Right cardiac atrium (tissue), 5 donors: ENCODE measurements at regions of chr9 and their contacts with region 1.

Region 1: GRCh38 chr9:71162126-71162525 is 40.7 kb upstream of the TRPM3 start:
- DNase-seq: no peak
- ATAC-seq: no peak
- H3K4me3 ChIP-seq: no peak overlapping the region
- H3K27ac ChIP-seq: no peak overlapping the region
- H3K4me1 ChIP-seq: no peaks in the 10 kb centered on the region
- H3K27me3 ChIP-seq: no peaks in the 10 kb centered on the region

Region 2: GRCh38 chr9:71108937-71109336 is 53.2 kb before region 1 on chr9:
- intact Hi-C with region 1: loop called in 1 of 4 experiments (anchors 10 kb)
- DNase-seq: no peak
- ATAC-seq: no peak
- H3K4me3 ChIP-seq: no peak overlapping the region
- H3K27ac ChIP-seq: no peak overlapping the region
- H3K4me1 ChIP-seq: no peaks in the 10 kb centered on the region
- H3K27me3 ChIP-seq: no peaks in the 10 kb centered on the region